ENCODE measurements at regions of chr17 and their contacts with region 1.

Region 1: GRCh38 chr17:78013683-78014467 is 55.4 kb downstream of the TNRC6C start:
- DNase-seq: no peak
- H3K4me3 ChIP-seq: no peak overlapping the region
- H3K27ac ChIP-seq: no peak overlapping the region
- H3K4me1 ChIP-seq: peaks cover 0 to 7% (median 0%) of the 10 kb centered on the region in 3 donors
- H3K27me3 ChIP-seq: no peaks in the 10 kb centered on the region
- CTCF ChIP-seq: peak; percentile 63 to 81 (median 70)
- POLR2A ChIP-seq: no peak

Region 2: DNA sequence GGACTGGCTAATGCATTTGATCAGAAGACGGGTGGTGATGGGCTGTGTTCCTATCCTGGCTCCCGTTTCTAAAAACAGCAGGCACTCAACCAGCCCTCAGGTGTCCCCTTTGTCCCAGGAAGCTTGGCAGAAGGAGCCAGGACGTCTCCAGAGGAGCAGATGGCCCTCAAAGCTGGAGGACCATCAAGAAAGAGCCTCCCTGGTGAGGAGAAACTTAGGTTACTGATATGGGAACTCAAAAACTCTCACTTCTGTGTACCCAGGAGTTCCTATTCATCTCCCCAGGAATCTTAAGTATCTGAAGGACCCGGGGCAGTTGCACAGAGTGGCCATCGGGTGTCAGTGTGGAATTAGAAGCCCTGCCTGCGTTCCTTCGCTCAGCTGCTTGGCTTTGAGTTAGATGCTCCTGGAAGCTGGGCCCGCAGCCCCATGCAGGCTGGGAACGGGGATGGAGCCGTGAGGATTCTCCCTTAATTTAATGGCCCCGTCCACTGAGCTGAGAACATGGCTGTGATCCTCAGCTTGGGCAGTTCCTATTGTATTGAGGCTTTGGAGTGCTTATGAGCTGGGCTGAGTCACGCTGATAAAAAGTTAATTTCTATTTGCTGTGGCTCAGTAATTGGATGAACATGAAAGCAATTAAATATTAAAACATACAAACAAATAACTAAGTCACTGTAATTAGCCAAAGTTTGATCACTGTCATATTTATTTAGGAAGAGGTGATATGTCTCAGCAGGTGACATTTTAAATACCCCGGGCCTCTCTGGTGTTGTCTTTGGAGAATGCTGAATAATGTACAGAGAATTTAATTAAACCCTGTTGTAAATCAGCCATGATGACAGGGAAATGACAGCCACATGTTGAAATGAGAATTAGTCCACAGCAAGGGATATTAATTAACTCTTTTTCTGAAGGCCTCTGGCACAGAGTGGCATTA is 471.1 kb before region 1 on chr17:
- intact Hi-C with region 1: loop called (anchors 5 kb)
- DNase-seq: peak; percentile 12
- H3K4me3 ChIP-seq: no peak overlapping the region
- H3K27ac ChIP-seq: peak overlapping the region in 1 of 4 donors; percentile 7
- H3K4me1 ChIP-seq: peaks cover 0 to 30% (median 7%) of the 10 kb centered on the region in 3 donors
- H3K27me3 ChIP-seq: peaks cover 0 to 74% (median 0%) of the 10 kb centered on the region in 4 donors
- CTCF ChIP-seq: peak; percentile 50 to 90 (median 86)
- POLR2A ChIP-seq: no peak